ENCODE measurements at regions of chr3 and their contacts with region 1.

Region 1: GRCh38 chr3:188400494-188401243 is 246.7 kb downstream of the LPP start:
- DNase-seq: peak; percentile 81
- H3K4me3 Mint-ChIP-seq: peak overlapping the region; percentile 18
- H3K27ac Mint-ChIP-seq: peak overlapping the region; percentile 68
- H3K4me1 Mint-ChIP-seq: peaks cover 62% of the 10 kb centered on the region
- H3K27me3 Mint-ChIP-seq: no peaks in the 10 kb centered on the region

Region 2: GRCh38 chr3:188061133-188061532 is 339.5 kb before region 1 on chr3:
- intact Hi-C with region 1: loop called (anchors 1 kb)
- DNase-seq: peak; percentile 85
- H3K4me3 Mint-ChIP-seq: peak overlapping the region; percentile 66
- H3K27ac Mint-ChIP-seq: peak overlapping the region; percentile 88
- H3K4me1 Mint-ChIP-seq: peaks cover 32% of the 10 kb centered on the region
- H3K27me3 Mint-ChIP-seq: no peaks in the 10 kb centered on the region

Region 3: GRCh38 chr3:188092648-188093047 is 308.0 kb before region 1 on chr3:
- intact Hi-C with region 1: no loop called
- DNase-seq: peak; percentile 61
- H3K4me3 Mint-ChIP-seq: no peak overlapping the region
- H3K27ac Mint-ChIP-seq: peak overlapping the region; percentile 49
- H3K4me1 Mint-ChIP-seq: peaks cover 6% of the 10 kb centered on the region
- H3K27me3 Mint-ChIP-seq: no peaks in the 10 kb centered on the region

Region 4: GRCh38 chr3:188339410-188340295 is 61.0 kb before region 1 on chr3:
- intact Hi-C with region 1: loop called (anchors 1 kb)
- DNase-seq: peak; percentile 81
- H3K4me3 Mint-ChIP-seq: peak overlapping the region; percentile 66
- H3K27ac Mint-ChIP-seq: peak overlapping the region; percentile 93
- H3K4me1 Mint-ChIP-seq: peaks cover 34% of the 10 kb centered on the region
- H3K27me3 Mint-ChIP-seq: peaks cover 6% of the 10 kb centered on the region

Region 5: GRCh38 chr3:188439080-188439479 is 38.4 kb after region 1 on chr3:
- intact Hi-C with region 1: loop called (anchors 2 kb)
- DNase-seq: peak; percentile 79
- H3K4me3 Mint-ChIP-seq: peak overlapping the region; percentile 55
- H3K27ac Mint-ChIP-seq: peak overlapping the region; percentile 91
- H3K4me1 Mint-ChIP-seq: peaks cover 43% of the 10 kb centered on the region
- H3K27me3 Mint-ChIP-seq: no peaks in the 10 kb centered on the region

Region 6: GRCh38 chr3:188683032-188683521 is 282.4 kb after region 1 on chr3:
- intact Hi-C with region 1: loop called (anchors 5 kb)
- DNase-seq: no peak
- H3K4me3 Mint-ChIP-seq: no peak overlapping the region
- H3K27ac Mint-ChIP-seq: peak overlapping the region; percentile 47
- H3K4me1 Mint-ChIP-seq: peaks cover 28% of the 10 kb centered on the region
- H3K27me3 Mint-ChIP-seq: no peaks in the 10 kb centered on the region

Region 7: DNA sequence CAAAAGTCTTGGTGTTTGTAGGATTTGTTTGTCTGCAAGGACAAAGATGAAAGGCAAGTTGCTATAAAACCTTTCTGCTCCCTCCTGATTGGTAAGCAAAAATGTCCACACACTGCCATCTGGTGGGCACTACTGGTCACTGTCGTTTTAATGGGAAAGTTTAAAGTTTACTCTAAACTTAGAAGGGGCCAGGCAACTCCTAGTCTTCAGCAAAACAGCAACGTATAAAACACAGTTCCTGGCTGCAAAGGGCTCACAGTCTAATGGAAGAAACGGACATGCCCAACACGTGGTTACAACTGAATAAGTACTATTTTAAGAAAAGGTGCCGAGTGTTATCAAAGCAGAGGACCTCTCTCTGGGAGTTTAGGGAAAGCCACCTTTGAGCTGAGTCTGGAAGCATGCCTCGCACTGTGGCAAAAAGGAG is 747.4 kb after region 1 on chr3:
- intact Hi-C with region 1: loop called (anchors 10 kb)
- DNase-seq: peak; percentile 89
- H3K4me3 Mint-ChIP-seq: no peak overlapping the region
- H3K27ac Mint-ChIP-seq: no peak overlapping the region
- H3K4me1 Mint-ChIP-seq: peaks cover 28% of the 10 kb centered on the region
- H3K27me3 Mint-ChIP-seq: peaks cover 10% of the 10 kb centered on the region